A673 (cell line): ENCODE measurements at regions of chr17 and their contacts with region 1.

Region 1: DNA sequence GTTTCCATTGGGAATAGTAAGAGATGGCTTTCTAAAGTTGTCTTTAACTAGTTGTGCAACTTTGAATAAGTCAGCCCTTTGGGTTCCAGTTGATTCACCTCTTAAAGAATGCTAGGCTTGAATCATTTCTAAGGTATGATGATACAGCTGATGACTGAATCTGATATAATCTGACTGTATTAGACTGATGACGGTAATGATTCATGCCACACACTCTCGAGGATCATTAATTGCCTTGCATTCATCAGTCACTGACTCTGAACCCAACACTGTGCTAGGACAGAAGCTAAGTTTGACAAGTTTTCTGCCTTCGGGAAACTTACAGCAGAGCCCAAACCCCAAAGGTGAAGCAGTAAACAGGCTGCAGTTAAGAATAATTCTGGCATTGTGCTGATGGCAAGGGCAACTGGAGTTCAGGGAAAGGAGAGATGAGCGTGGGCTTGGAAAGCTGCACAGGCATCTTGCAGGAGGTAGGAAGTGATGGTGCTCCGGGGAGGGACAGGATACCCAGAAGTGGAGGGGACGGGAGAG is 25.8 kb downstream of the ASIC2 start:
- DNase-seq: peak; percentile 41
- H3K4me3 ChIP-seq: no peak overlapping the region
- H3K27ac ChIP-seq: peak overlapping the region; percentile 93
- H3K4me1 ChIP-seq: peaks cover 67% of the 10 kb centered on the region
- H3K27me3 ChIP-seq: no peaks in the 10 kb centered on the region
- CTCF ChIP-seq: no peak

Region 2: DNA sequence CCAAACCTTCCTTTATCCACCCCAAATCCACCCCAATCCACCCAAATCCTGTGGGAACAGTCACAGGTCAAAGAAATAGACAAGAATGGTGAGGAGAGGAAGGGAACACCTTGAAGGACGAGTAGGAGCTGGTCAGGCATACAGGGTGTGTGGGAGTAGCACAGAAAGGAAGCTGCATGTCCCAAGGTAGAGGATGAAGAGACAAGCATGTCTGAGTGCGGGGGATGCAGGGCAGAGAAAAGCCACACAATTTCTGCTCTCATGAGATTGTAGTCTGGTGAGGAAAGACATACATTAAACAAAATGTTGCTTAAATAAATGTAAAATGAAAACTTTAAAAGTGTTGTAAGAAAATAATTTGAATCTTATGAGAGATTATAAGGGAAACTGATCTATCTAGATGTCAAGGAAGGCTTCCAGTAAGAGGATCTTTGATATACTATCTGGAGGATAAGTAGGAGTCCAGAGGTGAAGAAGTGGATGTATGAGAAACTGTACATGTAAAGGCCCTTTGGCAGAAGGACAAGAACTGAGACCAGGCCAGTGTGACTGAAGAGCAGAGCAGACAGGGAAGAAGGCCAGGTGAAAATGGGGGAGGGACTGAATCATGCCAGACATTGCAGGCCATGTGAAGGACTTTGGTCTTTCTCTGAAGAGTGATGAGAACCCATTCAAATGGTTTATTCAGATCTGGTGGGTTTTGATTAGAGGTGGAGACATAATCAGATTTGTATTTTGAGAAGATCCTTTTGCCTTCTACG is 320.8 kb before region 1 on chr17:
- CTCF ChIA-PET with region 1: no interaction called
- POLR2A ChIA-PET with region 1: no interaction called
- intact Hi-C with region 1: loop called (anchors 2 kb)
- DNase-seq: no peak
- H3K4me3 ChIP-seq: no peak overlapping the region
- H3K27ac ChIP-seq: peak overlapping the region; percentile 77
- H3K4me1 ChIP-seq: peaks cover 11% of the 10 kb centered on the region
- H3K27me3 ChIP-seq: no peaks in the 10 kb centered on the region
- CTCF ChIP-seq: no peak

Region 3: DNA sequence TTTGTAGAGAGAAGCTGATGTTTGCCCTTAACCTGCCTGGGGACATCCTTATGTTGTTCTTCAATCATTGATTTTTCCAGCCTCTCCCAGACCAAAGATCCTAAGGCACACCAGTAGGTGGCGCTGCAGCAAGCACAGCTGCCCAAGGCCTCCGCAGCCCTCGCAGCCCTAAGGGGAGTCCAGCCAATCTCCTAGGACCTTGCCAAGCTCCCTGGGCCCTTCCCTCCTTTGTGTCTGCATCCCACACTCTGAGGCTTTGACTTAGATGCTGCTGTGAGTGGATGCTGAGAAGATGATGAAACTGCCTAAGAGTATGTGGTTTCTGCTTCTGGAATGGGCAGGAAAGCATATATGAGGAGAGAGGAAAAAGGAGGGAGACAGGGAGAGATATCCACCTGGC is 228.6 kb before region 1 on chr17:
- CTCF ChIA-PET with region 1: no interaction called
- POLR2A ChIA-PET with region 1: no interaction called
- intact Hi-C with region 1: loop called (anchors 5 kb)
- DNase-seq: peak; percentile 66
- H3K4me3 ChIP-seq: no peak overlapping the region
- H3K27ac ChIP-seq: no peak overlapping the region
- H3K4me1 ChIP-seq: peaks cover 19% of the 10 kb centered on the region
- H3K27me3 ChIP-seq: no peaks in the 10 kb centered on the region
- CTCF ChIP-seq: peak; percentile 79

Region 4: DNA sequence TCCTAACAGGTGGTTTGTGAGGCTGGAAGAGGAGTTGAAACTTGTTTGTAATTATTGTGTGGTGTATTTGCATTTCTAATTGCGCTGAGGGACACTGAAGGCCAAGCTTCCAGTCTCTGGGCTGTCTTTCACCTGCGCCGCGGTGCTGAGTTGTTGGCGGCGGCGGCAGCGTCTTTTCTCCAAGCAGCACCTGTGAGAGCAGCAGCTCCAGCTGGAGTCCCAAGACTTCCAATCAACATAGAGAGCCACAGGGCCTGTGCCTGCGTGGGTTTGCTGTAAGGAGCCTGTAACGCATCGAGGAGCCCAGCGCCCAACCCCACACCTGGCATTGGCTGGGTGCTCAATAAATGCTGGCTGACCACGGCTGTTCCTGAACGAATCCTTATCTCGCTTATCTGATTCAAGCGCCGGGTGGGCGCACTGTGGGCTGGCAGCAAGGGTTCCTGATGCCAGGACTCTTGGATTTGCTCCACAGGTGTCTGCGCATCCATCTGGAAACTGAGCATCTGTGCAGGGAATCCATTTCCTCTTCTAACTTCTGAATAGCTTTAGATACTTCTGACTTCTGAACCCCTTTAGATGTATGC is 112.4 kb before region 1 on chr17:
- CTCF ChIA-PET with region 1: no interaction called
- POLR2A ChIA-PET with region 1: no interaction called
- intact Hi-C with region 1: loop called (anchors 2 kb)
- DNase-seq: no peak
- H3K4me3 ChIP-seq: no peak overlapping the region
- H3K27ac ChIP-seq: no peak overlapping the region
- H3K4me1 ChIP-seq: peaks cover 27% of the 10 kb centered on the region
- H3K27me3 ChIP-seq: no peaks in the 10 kb centered on the region
- CTCF ChIP-seq: no peak